ENCODE measurements at regions of chr2 and their contacts with region 1.

Region 1: DNA sequence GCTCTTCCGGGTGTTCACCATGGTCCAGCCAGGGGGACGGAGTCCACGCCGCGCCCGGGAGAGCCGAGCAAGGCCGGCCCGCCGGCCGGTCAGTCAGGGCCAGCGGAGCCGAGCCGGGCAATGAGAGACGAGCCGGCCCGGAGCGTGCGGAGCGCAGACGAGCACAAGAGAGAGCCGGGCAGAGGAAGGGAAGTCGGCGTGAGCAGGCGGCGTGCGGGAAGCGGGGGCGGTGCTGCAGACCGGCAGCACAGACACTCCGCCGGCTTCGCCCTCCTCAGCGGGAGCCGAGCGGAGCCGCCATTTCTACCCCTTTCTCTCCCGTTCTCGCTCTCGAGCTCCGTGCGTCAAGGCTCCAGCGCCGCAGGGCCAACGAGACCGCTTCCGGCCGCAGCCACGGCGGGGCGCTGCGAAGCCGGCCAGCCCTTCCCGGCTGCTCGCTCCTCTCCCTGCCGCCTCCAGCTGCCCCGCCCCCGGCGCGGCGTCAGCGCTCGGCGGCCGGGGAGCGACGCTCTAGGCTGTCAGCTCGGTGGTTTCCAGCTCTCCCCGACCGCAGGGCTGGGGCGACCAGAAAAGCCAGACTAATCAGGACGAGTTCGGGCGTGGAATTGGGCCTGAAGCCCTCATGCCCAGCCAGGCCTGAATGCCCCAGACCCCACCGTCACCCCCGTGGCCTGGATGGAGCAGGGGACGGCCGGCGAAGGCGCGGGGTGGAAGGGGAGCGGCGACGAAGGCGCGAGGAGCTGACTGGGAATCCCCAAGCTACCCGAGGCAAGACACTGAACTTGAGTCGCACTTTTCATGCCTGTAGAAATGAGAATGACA is at the start of gene ATAD2B:
- DNase-seq: peak; percentile 46
- H3K4me3 ChIP-seq: peak within 1 kb of the TSS; percentile 85
- CTCF ChIP-seq: peak; percentile 91

Region 2: GRCh38 chr2:23824777-23825212 is 102.2 kb before region 1 on chr2:
- CTCF ChIA-PET with region 1: interaction called, 25 read pairs
- POLR2A ChIA-PET with region 1: no interaction called
- DNase-seq: no peak
- H3K4me3 ChIP-seq: no peak overlapping the region
- CTCF ChIP-seq: peak; percentile 44

Region 3: GRCh38 chr2:23850564-23851256 is 76.3 kb before region 1 on chr2:
- CTCF ChIA-PET with region 1: no interaction called
- POLR2A ChIA-PET with region 1: no interaction called
- DNase-seq: no peak
- H3K4me3 ChIP-seq: no peak overlapping the region
- CTCF ChIP-seq: no peak

Region 4: GRCh38 chr2:23912054-23912453 is 14.9 kb before region 1 on chr2:
- CTCF ChIA-PET with region 1: interaction called, 24 read pairs
- POLR2A ChIA-PET with region 1: interaction called, 9 read pairs
- DNase-seq: no peak
- H3K4me3 ChIP-seq: no peak overlapping the region
- CTCF ChIP-seq: no peak

Region 5: GRCh38 chr2:24058564-24059271 is 131.8 kb after region 1 on chr2:
- CTCF ChIA-PET with region 1: interaction called, 14 read pairs
- POLR2A ChIA-PET with region 1: no interaction called
- DNase-seq: no peak
- H3K4me3 ChIP-seq: no peak overlapping the region
- CTCF ChIP-seq: no peak

Region 6: GRCh38 chr2:24084386-24085361 is 157.7 kb after region 1 on chr2 and contains the start of gene TP53I3:
- CTCF ChIA-PET with region 1: interaction called, 54 read pairs
- POLR2A ChIA-PET with region 1: interaction called, 26 read pairs
- DNase-seq: no peak
- H3K4me3 ChIP-seq: peak within 1 kb of the TSS; percentile 82
- CTCF ChIP-seq: peak; percentile 95

Region 7: DNA sequence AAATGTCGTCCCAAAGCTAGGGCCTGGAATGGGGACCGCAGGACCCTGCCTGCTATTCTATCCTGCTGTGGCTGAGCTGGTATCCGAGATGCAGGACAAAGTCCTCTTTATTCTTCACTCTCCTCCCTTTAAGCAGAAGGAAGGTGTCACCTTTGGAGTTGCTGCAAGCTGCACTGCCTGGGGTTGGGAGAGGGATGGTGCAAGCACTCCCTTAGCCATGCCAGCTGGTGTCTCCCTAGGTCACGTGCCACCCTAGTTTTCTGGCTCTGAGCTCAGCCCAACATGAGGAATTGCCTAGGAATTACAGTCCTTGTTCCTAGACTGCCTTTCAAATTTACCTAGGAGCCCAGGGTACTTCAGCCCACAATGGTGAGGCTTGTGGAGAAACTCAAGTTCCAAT is 226.5 kb after region 1 on chr2:
- CTCF ChIA-PET with region 1: no interaction called
- POLR2A ChIA-PET with region 1: no interaction called
- DNase-seq: no peak
- H3K4me3 ChIP-seq: no peak overlapping the region
- CTCF ChIP-seq: no peak

Region 8: GRCh38 chr2:24203029-24203786 is 276.2 kb after region 1 on chr2:
- CTCF ChIA-PET with region 1: no interaction called
- POLR2A ChIA-PET with region 1: no interaction called
- DNase-seq: no peak
- H3K4me3 ChIP-seq: no peak overlapping the region
- CTCF ChIP-seq: no peak

Measured in AG04449 (cell line).